ENCODE measurements at regions of chr4 and their contacts with region 1.

Region 1: GRCh38 chr4:39469429-39470077 is 10.7 kb downstream of the LIAS start:
- DNase-seq: peak; percentile 36
- H3K4me3 Mint-ChIP-seq: no peak overlapping the region
- H3K27ac Mint-ChIP-seq: no peak overlapping the region
- H3K4me1 Mint-ChIP-seq: peaks cover 6% of the 10 kb centered on the region
- H3K27me3 Mint-ChIP-seq: no peaks in the 10 kb centered on the region

Region 2: DNA sequence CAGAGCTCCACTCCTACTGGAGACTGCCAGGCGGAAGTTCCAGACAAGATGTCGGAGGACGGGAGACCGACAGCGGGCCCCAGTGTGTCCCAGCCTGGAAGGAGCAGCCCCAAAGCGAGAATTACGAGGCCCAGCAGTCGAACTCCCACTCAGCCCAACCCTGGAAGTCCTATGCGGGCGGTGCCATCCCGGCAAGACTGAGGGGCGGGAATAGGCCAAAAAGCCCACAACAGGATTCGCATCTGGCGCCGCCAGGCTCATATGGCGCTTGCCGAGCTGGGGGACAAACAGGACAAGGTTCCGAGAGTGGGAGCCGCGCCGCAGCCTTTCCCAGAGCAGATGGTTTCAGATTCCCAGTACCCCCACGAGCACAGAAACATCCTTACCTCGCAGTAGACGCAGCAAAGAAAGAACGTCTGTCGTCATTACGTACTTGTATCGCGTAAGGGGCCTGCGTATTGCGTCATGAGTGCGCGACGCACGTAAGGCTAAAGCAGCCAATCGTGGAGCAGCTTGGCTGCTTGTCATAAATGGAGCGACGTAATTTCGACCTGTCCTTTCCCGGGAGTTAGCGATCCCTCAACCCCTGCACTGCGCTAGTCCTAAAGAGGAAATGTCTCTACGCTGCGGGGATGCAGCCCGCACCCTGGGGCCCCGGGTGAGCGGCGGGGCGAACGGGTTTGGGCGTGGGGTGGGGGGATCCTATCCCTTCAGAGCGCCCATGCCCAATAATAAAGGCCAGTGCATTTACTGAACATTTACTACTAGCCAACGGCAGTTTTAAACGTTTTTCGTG is 10.8 kb before region 1 on chr4 and contains the starts of genes LIAS and RPL9:
- CTCF ChIA-PET with region 1: interaction called, 14 read pairs
- DNase-seq: peak; percentile 95
- H3K4me3 Mint-ChIP-seq: peak within 1 kb of the TSS; percentile 98
- H3K27ac Mint-ChIP-seq: peak within 1 kb of the TSS; percentile 100
- H3K4me1 Mint-ChIP-seq: peaks cover 58% of the 10 kb centered on the region
- H3K27me3 Mint-ChIP-seq: no peaks in the 10 kb centered on the region

Region 3: DNA sequence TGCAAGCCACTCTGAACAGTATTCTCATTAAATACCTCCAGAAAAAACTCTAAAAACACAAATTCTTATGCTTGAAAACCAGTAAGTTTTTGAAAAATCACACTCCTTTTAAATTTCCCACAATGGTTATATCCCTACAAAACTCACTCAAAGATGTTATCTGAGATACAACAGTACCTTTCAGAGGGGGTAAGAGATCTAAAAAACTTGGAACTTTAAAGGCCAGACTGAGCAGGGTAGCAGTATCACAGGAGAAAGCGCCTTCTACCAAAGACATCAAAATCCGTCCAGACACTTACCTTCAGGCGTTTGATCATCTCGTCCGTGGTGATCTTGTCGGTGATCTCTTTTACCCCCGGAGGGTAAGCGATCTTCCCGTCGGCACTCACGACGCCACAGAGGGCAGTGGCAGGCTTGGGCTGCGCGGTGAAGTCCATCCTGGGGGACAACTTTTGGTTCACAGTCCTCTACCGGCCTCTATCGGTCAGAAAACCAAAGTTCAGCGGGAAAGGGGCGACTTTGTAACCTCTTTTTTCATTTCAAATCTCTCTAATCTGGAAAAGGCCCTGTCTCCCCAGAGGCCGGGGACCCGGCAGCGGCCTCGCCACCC is 506.7 kb after region 1 on chr4:
- CTCF ChIA-PET with region 1: interaction called, 12 read pairs
- DNase-seq: peak; percentile 79
- H3K4me3 Mint-ChIP-seq: peak overlapping the region; percentile 90
- H3K27ac Mint-ChIP-seq: peak overlapping the region; percentile 75
- H3K4me1 Mint-ChIP-seq: peaks cover 45% of the 10 kb centered on the region
- H3K27me3 Mint-ChIP-seq: no peaks in the 10 kb centered on the region

Measured in activated naive CD4-positive, alpha-beta T cell treated with anti-CD3 and anti-CD28 coated beads, Interleukin-2, amount 10 ng/mL, durations not matched to agents 7 days and 5 days (primary cell).